PC-9 (cell line): ENCODE measurements at regions of chr3 and their contacts with region 1.

Region 1: DNA sequence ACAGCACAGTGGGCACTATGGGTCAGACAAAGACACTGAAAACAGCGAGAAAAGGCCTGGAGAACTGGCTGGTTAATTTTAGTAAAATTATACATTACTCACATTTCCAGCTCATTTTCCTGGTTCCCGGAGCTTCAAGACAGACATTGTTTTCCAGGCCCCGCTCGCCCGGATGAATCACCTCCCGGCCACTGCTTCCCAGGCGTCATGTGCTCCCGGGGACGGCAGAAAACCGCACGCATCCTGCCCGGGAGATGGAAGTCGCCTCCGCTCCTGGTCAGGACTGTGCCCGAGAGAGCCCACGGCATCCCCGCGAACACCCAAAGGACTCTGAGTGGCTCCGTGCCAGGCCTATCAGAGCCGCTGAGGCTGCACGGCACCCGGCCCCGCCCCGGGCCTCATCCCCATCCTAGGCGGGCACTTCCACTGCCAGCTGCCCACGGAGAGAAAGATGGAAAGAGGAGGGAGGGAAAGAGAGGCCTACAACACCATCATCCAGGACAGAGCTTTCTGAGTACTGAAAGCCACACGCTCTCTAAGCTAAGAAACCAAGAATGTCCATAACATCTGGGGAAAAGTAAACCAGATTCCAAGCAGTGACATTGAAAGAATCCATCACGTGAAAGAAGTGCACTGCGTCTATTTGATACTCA is 75.1 kb downstream of the VGLL4 start:
- DNase-seq: peak; percentile 51 to 52
- H3K4me3 ChIP-seq: peak overlapping the region; percentile 30; the same call in 1 of the 2 replicates
- H3K27ac ChIP-seq: peak overlapping the region; percentile 96
- H3K4me1 ChIP-seq: peaks cover 34% of the 10 kb centered on the region
- H3K27me3 ChIP-seq: no peaks in the 10 kb centered on the region
- CTCF ChIP-seq: no peak

Region 2: DNA sequence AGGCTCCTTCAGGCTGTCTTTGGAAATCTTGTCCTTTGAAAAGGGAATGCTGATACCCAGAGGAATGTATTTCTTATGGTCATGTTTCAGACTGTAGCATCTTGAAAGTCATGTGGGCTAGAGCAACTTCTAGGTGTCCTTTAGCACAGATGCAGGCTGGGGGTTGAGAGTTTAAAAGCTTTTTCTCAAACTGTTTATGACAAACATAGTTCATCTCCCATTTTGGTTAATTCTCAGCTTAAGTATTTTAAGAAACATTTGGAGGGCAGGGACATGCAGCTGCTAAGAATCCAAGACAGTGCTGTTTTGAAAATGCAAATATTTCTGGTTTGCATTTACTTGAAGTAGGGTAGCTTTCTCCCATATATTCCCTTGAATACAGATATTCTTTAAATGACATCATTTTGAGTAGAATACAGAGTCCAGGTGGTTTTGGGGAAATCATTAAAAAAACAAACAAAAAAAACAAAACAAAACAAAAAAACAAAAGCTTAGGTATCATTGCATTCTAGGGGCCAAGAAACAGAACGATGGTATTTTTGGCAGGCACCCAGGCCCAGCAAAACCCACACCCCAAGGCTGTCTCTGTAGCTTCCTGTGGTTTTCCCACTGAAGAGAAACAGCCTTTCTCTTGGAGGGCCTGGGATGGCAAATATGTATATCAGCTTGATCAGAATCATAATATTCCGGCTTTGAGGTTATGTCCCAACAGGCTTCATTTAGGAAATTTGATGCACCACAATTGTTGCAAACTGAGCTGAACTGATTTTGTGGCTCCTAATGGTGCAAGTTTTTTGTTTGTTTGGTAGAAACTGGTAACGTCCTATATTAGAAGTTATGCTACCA is 176.4 kb before region 1 on chr3:
- CTCF ChIA-PET with region 1: interaction called, 13 read pairs
- POLR2A ChIA-PET with region 1: no interaction called
- intact Hi-C with region 1: no loop called
- DNase-seq: peak in 1 of 2 experiments; percentile 20
- H3K4me3 ChIP-seq: no peak overlapping the region
- H3K27ac ChIP-seq: no peak overlapping the region
- H3K4me1 ChIP-seq: no peaks in the 10 kb centered on the region
- H3K27me3 ChIP-seq: no peaks in the 10 kb centered on the region
- CTCF ChIP-seq: no peak

Region 3: GRCh38 chr3:11548721-11549131 is 19.9 kb before region 1 on chr3:
- CTCF ChIA-PET with region 1: no interaction called
- POLR2A ChIA-PET with region 1: no interaction called
- intact Hi-C with region 1: no loop called
- DNase-seq: peak in 1 of 2 experiments; percentile 75
- H3K4me3 ChIP-seq: no peak overlapping the region
- H3K27ac ChIP-seq: no peak overlapping the region; the same call in 1 of the 2 replicates
- H3K4me1 ChIP-seq: no peaks in the 10 kb centered on the region
- H3K27me3 ChIP-seq: no peaks in the 10 kb centered on the region
- CTCF ChIP-seq: no peak

Region 4: GRCh38 chr3:12198301-12198700 is 629.7 kb after region 1 on chr3:
- CTCF ChIA-PET with region 1: no interaction called
- POLR2A ChIA-PET with region 1: no interaction called
- intact Hi-C with region 1: no loop called
- DNase-seq: peak in 1 of 2 experiments; percentile 52
- H3K4me3 ChIP-seq: no peak overlapping the region
- H3K27ac ChIP-seq: peak overlapping the region; percentile 20; the same call in 1 of the 2 replicates
- H3K4me1 ChIP-seq: peaks cover 61% of the 10 kb centered on the region
- H3K27me3 ChIP-seq: no peaks in the 10 kb centered on the region
- CTCF ChIP-seq: no peak